OCI-LY7 (cell line): ENCODE measurements at regions of chr4 and their contacts with region 1.

Region 1: GRCh38 chr4:42513748-42514492 is 116.6 kb downstream of the SHISA3 start:
- DNase-seq: no peak
- H3K4me3 ChIP-seq: no peak overlapping the region
- H3K27ac ChIP-seq: no peak overlapping the region
- H3K4me1 ChIP-seq: peaks cover 8% of the 10 kb centered on the region
- CTCF ChIP-seq: no peak

Region 2: DNA sequence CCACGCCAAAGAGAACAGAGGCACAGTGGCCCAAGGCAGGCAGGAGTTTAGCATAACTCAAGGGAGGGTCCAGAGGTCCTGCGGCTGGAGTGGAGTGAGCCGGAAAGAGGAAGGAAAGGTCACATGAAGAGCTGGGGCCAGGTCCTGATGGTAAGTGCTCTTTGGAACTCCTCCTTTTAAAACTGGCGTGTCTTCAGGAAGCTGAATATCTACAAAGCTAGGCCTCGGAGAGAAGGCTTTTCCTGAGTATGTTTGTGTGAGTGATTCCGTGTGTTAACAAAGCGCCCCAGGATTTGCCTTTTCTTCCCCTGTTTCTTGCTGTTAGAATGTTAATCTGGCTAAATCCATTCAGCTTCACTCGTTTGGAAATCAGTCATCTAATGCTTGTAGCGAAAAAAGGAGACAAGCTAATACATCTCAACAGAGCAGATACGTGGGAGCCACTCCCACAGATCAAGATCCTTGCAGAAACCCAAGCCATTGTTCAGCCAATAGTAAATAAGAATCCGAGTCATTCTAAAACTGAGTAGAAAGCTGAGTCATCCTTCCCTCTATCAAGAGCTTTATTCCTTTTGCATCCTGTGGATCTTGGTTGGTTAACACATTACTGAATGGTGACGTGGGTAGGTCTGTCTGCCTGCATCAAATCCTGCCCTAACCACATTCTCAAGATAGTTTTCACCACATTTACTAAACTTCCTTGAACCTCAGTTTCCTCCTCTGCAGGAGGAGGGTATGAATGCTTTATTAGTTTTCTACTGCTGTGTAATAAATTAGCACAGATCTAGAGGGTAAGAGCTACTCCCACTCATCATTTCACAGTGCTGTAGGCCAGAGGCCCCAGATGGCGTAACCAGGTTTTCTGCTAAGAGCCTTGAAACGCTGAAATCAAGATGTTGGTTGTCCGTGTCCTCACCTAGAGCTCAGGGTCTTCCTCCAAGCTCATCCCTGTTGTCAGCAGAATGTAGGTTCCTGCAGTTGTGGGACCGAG is 1841.1 kb before region 1 on chr4:
- CTCF ChIA-PET with region 1: no interaction called
- POLR2A ChIA-PET with region 1: no interaction called
- intact Hi-C with region 1: loop called (anchors 5 kb)
- DNase-seq: no peak
- H3K4me3 ChIP-seq: no peak overlapping the region
- H3K27ac ChIP-seq: no peak overlapping the region
- H3K4me1 ChIP-seq: no peaks in the 10 kb centered on the region
- CTCF ChIP-seq: no peak

Region 3: DNA sequence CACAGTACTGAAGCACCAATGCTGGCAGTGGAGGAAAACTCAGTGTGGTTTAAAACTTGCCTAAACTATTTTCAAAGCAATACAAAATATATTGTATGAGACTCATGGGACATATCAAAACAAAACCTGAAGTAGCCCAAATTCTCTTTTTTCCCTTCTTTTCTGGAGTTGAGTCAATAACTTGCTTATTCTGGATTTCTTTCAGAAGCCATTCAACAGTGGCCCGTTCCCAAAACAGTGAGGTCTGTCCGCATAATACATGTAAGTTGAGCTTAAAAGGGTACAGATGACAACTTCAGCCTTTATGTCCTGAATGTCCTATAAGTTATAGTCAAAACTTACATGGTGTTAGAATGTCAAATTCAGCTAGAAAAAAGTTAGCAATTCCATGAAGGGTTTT is 15.9 kb before region 1 on chr4:
- CTCF ChIA-PET with region 1: no interaction called
- POLR2A ChIA-PET with region 1: interaction called, 23 read pairs
- intact Hi-C with region 1: no loop called
- DNase-seq: no peak
- H3K4me3 ChIP-seq: no peak overlapping the region
- H3K27ac ChIP-seq: no peak overlapping the region
- H3K4me1 ChIP-seq: no peaks in the 10 kb centered on the region
- CTCF ChIP-seq: no peak